CD8-positive, alpha-beta memory T cell (primary cell): ENCODE measurements at regions of chr11 and their contacts with region 1.

Region 1: DNA sequence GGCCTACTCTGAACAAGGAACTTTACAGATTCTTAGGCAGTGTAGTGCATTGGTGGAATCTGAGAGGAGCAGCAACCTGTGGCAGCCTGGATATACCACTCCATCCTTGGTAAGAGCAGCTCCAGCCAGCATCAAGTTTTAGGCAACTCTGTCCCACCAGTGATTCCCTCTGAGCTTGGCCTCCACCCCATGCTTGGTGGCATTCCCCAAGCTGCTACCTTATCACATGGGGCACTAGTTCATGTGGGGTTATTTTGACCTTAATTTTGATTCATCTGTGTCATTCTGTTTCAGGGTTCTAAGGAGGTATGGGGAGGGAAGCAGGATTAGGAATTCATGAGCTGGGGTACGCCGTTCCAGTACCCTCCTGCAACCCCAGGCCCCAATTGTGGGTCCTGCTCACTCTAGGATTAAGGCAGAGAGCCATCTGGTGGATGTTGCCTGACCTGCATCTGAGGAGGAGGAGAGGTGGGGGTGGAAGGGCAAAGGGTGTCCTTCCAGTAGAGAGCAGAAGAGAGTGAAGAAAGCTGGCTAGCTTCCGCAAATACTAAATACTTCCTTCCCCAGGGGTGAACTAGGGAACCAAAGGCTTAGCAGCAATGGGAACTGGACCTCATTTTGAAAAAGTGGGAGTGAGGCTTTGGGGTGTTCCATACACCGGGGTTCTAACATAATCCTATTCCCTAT is 10.5 kb downstream of the LRRC51 start:
- DNase-seq: peak; percentile 39 to 77 (median 48)
- H3K4me3 ChIP-seq: no peak overlapping the region
- H3K4me3 Mint-ChIP-seq: peak overlapping the region in 1 of 7 donors; percentile 75
- H3K27ac ChIP-seq: no peak overlapping the region
- H3K27ac Mint-ChIP-seq: peak overlapping the region; percentile 37 to 84 (median 62)
- H3K4me1 ChIP-seq: no peaks in the 10 kb centered on the region
- H3K4me1 Mint-ChIP-seq: peaks cover 3 to 12% (median 3%) of the 10 kb centered on the region in 3 donors
- H3K27me3 ChIP-seq: no peaks in the 10 kb centered on the region
- H3K27me3 Mint-ChIP-seq: no peaks in the 10 kb centered on the region

Region 2: GRCh38 chr11:71962428-71963038 is 128.6 kb before region 1 on chr11:
- CTCF ChIA-PET with region 1: no interaction called
- POLR2A ChIA-PET with region 1: no interaction called
- DNase-seq: no peak
- H3K4me3 ChIP-seq: no peak overlapping the region
- H3K4me3 Mint-ChIP-seq: no peak overlapping the region
- H3K27ac ChIP-seq: no peak overlapping the region
- H3K27ac Mint-ChIP-seq: peak overlapping the region in 3 of 8 donors; percentile 35 to 61 (median 46)
- H3K4me1 ChIP-seq: peaks cover 5% of the 10 kb centered on the region
- H3K4me1 Mint-ChIP-seq: peaks cover 4 to 9% (median 7%) of the 10 kb centered on the region in 3 donors
- H3K27me3 ChIP-seq: no peaks in the 10 kb centered on the region
- H3K27me3 Mint-ChIP-seq: no peaks in the 10 kb centered on the region

Region 3: GRCh38 chr11:72102946-72103753 is 12.0 kb after region 1 on chr11 and contains the start of gene LAMTOR1:
- CTCF ChIA-PET with region 1: interaction called, 13 read pairs
- POLR2A ChIA-PET with region 1: no interaction called
- DNase-seq: peak; percentile 94 to 98 (median 96)
- H3K4me3 ChIP-seq: peak within 1 kb of the TSS; percentile 89
- H3K4me3 Mint-ChIP-seq: peak within 1 kb of the TSS; percentile 82 to 98 (median 89)
- H3K27ac ChIP-seq: peak within 1 kb of the TSS; percentile 94
- H3K27ac Mint-ChIP-seq: peak within 1 kb of the TSS; percentile 73 to 98 (median 96)
- H3K4me1 ChIP-seq: peaks cover 31% of the 10 kb centered on the region
- H3K4me1 Mint-ChIP-seq: peaks cover 37 to 47% (median 43%) of the 10 kb centered on the region in 3 donors
- H3K27me3 ChIP-seq: no peaks in the 10 kb centered on the region
- H3K27me3 Mint-ChIP-seq: no peaks in the 10 kb centered on the region
- total RNA-seq, gene LAMTOR1: 77.3 to 79.2 TPM